Activated T-helper 1 cell treated with anti-CD3 and anti-CD28 coated beads, Interleukin-12 subunit alpha, Interleukin-12 subunit beta, Interleukin-2, Interleukin-4 antibody, amounts not matched to agents 30 ng/mL and 10 ng/mL and 1 ng/mL, durations not matched to agents 14 hours and 24 hours and 36 hours (primary cell): ENCODE measurements at regions of chr18 and their contacts with region 1.

Region 1: DNA sequence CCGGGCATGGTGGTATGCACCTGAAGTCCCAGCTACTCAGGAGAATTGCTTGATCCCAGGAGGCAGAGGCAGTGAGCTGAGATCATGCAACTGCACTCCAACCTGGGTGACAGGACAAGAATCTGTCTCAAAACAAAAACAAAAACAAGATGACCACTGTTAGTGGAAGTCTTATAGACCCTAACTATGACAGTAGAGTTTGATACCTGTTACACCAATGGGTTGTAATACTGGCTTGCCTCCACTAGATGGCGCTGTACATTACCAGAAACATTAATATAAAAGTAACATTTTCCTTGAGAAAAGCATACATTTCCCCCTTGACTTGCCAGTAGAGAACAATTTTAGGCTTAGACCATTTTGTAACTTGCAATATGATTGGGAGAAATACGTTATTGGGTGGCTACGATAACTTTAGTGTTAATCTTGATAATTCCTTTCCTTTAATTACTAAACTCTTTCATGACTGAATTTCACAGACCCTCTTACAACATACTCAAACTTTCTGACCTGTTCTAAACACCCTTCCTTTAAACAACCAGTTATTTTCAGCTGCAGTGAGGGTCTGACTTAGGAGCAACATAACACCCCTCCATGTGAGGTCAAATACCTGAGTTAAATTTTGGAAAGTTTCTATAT is 19.5 kb downstream of the SLC25A52 start:
- DNase-seq: no peak
- H3K4me3 Mint-ChIP-seq: no peak overlapping the region
- H3K27ac Mint-ChIP-seq: no peak overlapping the region
- H3K4me1 Mint-ChIP-seq: no peaks in the 10 kb centered on the region
- H3K27me3 Mint-ChIP-seq: peaks cover 2% of the 10 kb centered on the region

Region 2: DNA sequence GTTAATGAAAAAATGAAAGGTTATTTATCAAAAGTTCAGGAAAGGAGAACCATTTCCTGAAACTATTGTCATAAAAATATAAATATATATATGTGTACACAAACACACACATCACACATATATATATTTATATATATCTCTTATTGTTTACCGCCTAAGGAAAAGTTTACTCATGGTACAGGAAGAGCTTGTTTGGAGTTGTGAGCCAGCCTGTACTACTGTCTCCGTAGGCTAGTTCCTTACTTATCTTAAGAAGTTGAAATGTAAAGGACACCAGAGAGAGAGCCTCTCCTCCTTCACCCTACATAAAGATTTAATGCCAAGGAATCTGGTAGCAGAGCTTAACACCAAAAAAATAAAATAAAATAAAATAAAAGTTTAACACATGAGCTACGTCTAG is 598.2 kb before region 1 on chr18:
- intact Hi-C with region 1: no loop called
- DNase-seq: no peak
- H3K4me3 Mint-ChIP-seq: no peak overlapping the region
- H3K27ac Mint-ChIP-seq: no peak overlapping the region
- H3K4me1 Mint-ChIP-seq: no peaks in the 10 kb centered on the region
- H3K27me3 Mint-ChIP-seq: no peaks in the 10 kb centered on the region

Region 3: GRCh38 chr18:31819106-31819924 is 78.1 kb after region 1 on chr18:
- intact Hi-C with region 1: loop called (anchors 1 kb)
- DNase-seq: no peak
- H3K4me3 Mint-ChIP-seq: no peak overlapping the region
- H3K27ac Mint-ChIP-seq: no peak overlapping the region
- H3K4me1 Mint-ChIP-seq: no peaks in the 10 kb centered on the region
- H3K27me3 Mint-ChIP-seq: peaks cover 1% of the 10 kb centered on the region

Region 4: GRCh38 chr18:31977270-31977872 is 236.2 kb after region 1 on chr18:
- intact Hi-C with region 1: loop called (anchors 1 kb)
- DNase-seq: no peak
- H3K4me3 Mint-ChIP-seq: no peak overlapping the region
- H3K27ac Mint-ChIP-seq: no peak overlapping the region
- H3K4me1 Mint-ChIP-seq: no peaks in the 10 kb centered on the region
- H3K27me3 Mint-ChIP-seq: peaks cover 4% of the 10 kb centered on the region